ENCODE measurements at regions of chr16 and their contacts with region 1.

Region 1: DNA sequence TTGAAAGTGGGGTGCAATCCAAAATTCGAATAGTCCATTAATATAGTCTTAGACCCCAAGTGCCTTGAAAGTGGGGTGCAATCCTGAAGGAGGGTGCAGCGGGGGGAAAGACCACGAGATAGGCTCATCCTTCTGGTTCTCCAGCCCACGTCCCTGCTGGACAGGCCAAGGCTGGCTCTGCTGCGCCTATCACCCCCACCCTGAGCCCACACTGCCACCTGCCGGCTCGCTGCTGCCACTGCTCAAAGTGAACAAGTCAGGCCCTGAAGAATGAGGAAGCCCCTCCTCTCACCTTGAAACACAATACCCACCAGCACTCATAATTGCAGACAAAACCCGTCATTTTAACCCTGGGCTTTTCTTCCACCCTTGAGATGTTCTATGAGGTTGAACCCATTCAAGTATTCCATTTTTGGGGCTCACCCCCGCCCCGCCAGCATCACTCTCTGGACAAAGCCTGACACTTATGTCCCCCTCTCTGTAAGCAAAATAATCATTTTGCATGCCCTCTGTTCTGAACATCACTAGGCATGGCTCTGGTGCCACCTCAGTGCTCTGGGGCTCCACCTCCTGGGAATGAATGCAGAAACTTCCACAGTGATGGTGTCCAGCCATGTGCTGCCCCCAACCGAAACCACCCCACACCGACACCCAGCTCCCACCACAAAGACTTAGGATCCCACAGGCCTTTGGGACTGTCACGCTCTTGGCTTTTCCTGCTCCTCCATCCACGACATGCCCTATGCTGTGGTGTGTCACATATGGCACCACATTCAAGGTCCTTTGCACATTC is 56.8 kb downstream of the BEAN1 start:
- DNase-seq: peak; percentile 67 to 95
- H3K4me3 ChIP-seq: no peak overlapping the region
- CTCF ChIP-seq: peak in 1 of 3 donors; percentile 53
- POLR2A ChIP-seq: no peak

Region 2: DNA sequence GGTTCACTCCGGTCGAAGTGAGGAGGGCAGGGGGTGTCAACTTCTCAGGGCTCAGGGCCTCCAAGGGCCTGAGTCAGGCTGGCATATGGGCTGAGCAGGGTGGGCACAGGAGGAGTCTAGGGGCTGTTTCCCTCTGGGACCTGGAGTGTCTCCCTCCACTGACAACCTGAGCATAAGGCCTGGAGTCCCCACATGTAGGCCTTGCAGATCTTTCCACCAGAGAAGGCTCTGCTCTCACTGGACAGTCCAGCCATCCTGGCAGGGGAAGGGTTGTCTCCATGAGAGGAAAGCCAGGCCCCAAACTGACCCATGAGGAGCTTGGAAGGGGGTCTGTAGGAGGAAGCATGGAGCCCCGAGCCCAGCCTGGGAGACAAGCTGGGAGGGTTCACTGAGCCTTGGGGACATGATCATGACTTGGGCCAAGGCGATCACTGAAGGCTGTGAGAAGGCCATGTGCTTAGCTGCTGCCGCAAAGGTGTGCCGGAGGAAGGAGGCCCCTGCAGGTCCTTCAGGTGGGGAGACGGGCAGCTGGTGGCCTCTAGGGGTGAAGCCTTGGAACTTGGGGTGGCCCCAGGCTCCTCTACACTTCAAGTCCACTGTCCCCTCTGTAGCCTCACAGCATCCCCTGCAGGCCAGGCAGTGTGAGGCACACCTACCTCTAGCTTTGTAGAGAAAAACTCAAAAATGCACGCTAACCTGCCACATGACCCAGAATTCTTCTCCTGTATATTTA is 105.3 kb after region 1 on chr16:
- intact Hi-C with region 1: loop called (anchors 10 kb)
- DNase-seq: no peak
- H3K4me3 ChIP-seq: no peak overlapping the region
- CTCF ChIP-seq: peak in 1 of 3 donors; percentile 30
- POLR2A ChIP-seq: no peak